ENCODE measurements at regions of chr2 and their contacts with region 1.

Region 1: GRCh38 chr2:224585205-224586088 is at the start of gene CUL3:
- DNase-seq: peak; percentile 100
- ATAC-seq: peak; percentile 86
- H3K4me3 Mint-ChIP-seq: peak within 1 kb of the TSS; percentile 95
- H3K27ac Mint-ChIP-seq: peak within 1 kb of the TSS; percentile 96
- H3K4me1 Mint-ChIP-seq: peaks cover 29% of the 10 kb centered on the region
- H3K27me3 Mint-ChIP-seq: no peaks in the 10 kb centered on the region
- total RNA-seq, gene CUL3: 77.6 to 85.8 TPM

Region 2: GRCh38 chr2:223944703-223945531 is 640.5 kb before region 1 on chr2 and contains the start of gene WDFY1:
- CTCF ChIA-PET with region 1: no interaction called
- POLR2A ChIA-PET with region 1: interaction called, 8 read pairs
- intact Hi-C with region 1: loop called in 1 of 2 experiments (anchors 2 kb)
- DNase-seq: peak; percentile 90
- ATAC-seq: peak; percentile 52
- H3K4me3 Mint-ChIP-seq: peak within 1 kb of the TSS; percentile 90
- H3K27ac Mint-ChIP-seq: peak within 1 kb of the TSS; percentile 90
- H3K4me1 Mint-ChIP-seq: peaks cover 62% of the 10 kb centered on the region
- H3K27me3 Mint-ChIP-seq: peaks cover 1% of the 10 kb centered on the region
- total RNA-seq, gene WDFY1: 33.6 to 37.5 TPM

Region 3: GRCh38 chr2:224520064-224520463 is 65.4 kb before region 1 on chr2:
- CTCF ChIA-PET with region 1: interaction called, 5 read pairs
- POLR2A ChIA-PET with region 1: interaction called, 6 read pairs
- intact Hi-C with region 1: loop called (anchors 1 kb)
- DNase-seq: peak; percentile 67
- ATAC-seq: peak; percentile 80
- H3K4me3 Mint-ChIP-seq: no peak overlapping the region
- H3K27ac Mint-ChIP-seq: peak overlapping the region; percentile 72
- H3K4me1 Mint-ChIP-seq: peaks cover 66% of the 10 kb centered on the region
- H3K27me3 Mint-ChIP-seq: no peaks in the 10 kb centered on the region

Region 4: DNA sequence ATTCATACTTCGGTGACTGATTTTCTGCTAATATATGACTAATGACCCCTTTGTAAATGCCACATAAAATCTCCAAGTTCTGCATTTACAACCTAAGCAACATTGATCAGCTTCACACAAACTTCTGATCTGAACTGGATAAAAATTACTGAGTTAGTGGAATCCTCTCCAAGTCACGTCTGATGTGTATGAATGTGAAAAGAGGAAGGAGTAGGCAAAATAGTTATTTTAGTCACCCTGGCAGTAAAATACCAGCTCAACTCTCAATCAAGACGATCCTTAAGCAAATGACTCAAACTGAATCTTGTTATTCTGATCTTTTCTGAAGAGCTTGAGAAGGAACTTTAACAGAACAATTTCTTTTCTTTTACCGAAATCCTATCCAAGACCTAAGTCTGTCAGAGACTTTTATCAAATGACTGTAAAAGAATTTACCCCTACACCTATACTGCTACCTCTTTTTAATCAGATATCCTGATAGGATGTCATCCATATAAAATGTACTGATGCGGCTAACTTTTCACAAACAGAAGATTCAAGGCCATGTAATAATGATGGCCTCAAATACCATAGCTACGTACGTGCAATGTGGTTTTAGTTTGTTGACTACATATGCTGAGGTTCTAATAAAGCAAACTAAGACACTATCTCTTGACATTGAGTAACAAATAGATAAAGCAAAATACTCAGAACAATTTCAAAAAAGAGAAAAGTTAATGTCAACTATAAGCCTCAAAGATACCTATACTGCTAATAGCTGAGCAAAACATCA is 24.0 kb before region 1 on chr2:
- CTCF ChIA-PET with region 1: interaction called, 11 read pairs
- POLR2A ChIA-PET with region 1: interaction called, 6 read pairs
- intact Hi-C with region 1: loop called (anchors 1 to 2 kb)
- DNase-seq: no peak
- ATAC-seq: peak; percentile 87
- H3K4me3 Mint-ChIP-seq: no peak overlapping the region
- H3K27ac Mint-ChIP-seq: no peak overlapping the region
- H3K4me1 Mint-ChIP-seq: peaks cover 34% of the 10 kb centered on the region
- H3K27me3 Mint-ChIP-seq: no peaks in the 10 kb centered on the region

Region 5: DNA sequence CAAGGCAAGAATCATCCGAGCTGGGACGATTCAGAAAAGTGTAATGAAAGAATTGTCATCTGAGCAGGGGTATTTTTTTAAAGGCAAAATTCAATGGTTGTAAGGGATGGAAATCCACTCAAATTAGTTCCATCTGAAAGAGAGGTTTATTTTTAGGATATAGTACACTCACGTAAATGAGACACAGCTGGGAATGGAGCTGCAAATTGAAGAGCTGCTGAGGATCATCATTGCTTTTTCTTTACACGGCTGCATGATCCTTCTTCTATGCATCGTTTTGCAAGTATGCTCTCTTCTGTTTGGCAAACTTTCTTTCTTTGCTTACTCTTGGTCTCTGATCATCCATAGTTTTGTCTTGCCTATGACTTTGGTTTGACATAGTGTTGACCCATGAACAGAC is 27.1 kb after region 1 on chr2:
- CTCF ChIA-PET with region 1: no interaction called
- POLR2A ChIA-PET with region 1: no interaction called
- intact Hi-C with region 1: no loop called
- DNase-seq: no peak
- ATAC-seq: no peak
- H3K4me3 Mint-ChIP-seq: no peak overlapping the region
- H3K27ac Mint-ChIP-seq: no peak overlapping the region
- H3K4me1 Mint-ChIP-seq: no peaks in the 10 kb centered on the region
- H3K27me3 Mint-ChIP-seq: peaks cover 6% of the 10 kb centered on the region

Region 6: DNA sequence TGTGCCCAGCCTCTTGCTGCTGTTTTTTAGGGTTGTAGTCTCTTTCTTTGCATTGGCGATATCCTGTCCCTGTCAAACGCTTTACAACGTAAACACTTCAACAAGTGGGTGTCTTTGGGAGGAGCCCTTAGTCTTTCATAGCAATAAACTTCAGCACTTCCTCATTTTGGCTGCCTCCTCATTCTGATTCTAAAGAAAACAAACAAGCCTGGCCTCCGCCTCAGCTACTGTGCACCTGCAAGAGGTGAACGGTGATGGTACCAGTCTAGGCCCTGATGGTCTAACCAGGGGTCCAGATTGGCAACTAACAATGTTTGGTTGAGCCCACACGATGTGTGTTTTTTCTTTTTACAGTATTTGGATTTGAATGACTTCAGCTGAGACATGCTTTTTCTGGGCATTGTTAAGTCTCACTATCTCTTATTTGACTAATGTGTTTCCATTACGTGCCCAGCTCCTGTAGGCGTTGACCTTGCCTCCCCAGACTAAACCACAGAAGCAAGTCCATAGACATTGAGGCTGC is 52.9 kb after region 1 on chr2:
- CTCF ChIA-PET with region 1: no interaction called
- POLR2A ChIA-PET with region 1: interaction called, 5 read pairs
- intact Hi-C with region 1: loop called in 1 of 2 experiments (anchors 1 kb)
- DNase-seq: peak; percentile 67
- ATAC-seq: peak; percentile 82
- H3K4me3 Mint-ChIP-seq: peak overlapping the region; percentile 37
- H3K27ac Mint-ChIP-seq: peak overlapping the region; percentile 95
- H3K4me1 Mint-ChIP-seq: peaks cover 12% of the 10 kb centered on the region
- H3K27me3 Mint-ChIP-seq: no peaks in the 10 kb centered on the region

Region 7: GRCh38 chr2:225041851-225042799 is 456.7 kb after region 1 on chr2 and contains the start of gene DOCK10:
- CTCF ChIA-PET with region 1: interaction called, 4 read pairs
- POLR2A ChIA-PET with region 1: no interaction called
- intact Hi-C with region 1: loop called in 1 of 2 experiments (anchors 5 kb)
- DNase-seq: peak; percentile 76
- ATAC-seq: peak; percentile 20
- H3K4me3 Mint-ChIP-seq: peak within 1 kb of the TSS; percentile 97
- H3K27ac Mint-ChIP-seq: peak within 1 kb of the TSS; percentile 98
- H3K4me1 Mint-ChIP-seq: peaks cover 50% of the 10 kb centered on the region
- H3K27me3 Mint-ChIP-seq: peaks cover 3% of the 10 kb centered on the region
- total RNA-seq, gene DOCK10: 177 to 196 TPM

Measured in activated CD4-positive, alpha-beta T cell treated with anti-CD3 and anti-CD28 coated beads for 36 hours (primary cell).